ENCODE measurements at regions of chr5 and their contacts with region 1.

Region 1: DNA sequence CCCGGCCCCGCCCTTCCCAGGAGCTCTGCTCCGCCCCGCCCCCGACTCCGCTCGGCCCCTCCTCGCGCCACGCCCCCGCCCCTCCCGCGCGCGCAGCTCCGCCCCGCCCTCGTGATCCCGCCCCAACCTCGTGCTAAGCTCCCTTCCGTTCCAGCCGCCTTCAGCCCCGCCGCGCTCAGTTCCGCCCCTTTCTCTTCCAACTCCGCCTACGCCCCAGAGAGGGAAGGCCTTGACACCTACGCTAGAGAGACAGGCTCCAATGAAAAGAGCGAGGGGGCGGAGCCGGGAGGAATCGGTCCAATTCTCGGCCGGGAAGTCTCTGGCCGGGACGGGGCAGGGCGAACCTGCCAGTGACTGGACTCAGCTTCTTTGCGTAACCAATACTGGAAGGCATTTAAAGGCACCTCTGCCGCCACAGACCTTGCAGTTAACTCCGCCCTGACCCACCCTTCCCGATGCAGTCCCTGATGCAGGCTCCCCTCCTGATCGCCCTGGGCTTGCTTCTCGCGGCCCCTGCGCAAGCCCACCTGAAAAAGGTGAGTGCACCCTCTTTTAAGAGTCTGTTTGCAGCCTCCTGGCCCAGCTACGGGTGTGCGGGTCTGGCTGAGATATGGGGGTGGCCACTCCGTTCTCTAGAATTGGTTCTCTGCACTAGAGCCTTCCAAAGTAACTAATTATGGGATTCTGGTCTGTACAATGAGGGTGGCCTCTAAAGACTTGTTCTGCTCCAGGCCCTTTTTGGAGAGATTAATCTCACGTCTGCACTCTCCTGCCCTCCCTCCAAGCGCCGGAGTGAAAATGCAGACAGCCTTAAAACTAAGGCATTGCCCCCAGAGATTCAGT is at the start of gene GM2A:
- DNase-seq: peak; percentile 92
- ATAC-seq: peak; percentile 83
- H3K4me3 Mint-ChIP-seq: peak within 1 kb of the TSS; percentile 96
- H3K27ac Mint-ChIP-seq: peak within 1 kb of the TSS; percentile 96
- H3K4me1 Mint-ChIP-seq: peaks cover 65% of the 10 kb centered on the region
- H3K27me3 Mint-ChIP-seq: no peaks in the 10 kb centered on the region
- CTCF ChIP-seq: no peak
- total RNA-seq, gene GM2A: 51.3 and 53.1 TPM in 2 replicates

Region 2: DNA sequence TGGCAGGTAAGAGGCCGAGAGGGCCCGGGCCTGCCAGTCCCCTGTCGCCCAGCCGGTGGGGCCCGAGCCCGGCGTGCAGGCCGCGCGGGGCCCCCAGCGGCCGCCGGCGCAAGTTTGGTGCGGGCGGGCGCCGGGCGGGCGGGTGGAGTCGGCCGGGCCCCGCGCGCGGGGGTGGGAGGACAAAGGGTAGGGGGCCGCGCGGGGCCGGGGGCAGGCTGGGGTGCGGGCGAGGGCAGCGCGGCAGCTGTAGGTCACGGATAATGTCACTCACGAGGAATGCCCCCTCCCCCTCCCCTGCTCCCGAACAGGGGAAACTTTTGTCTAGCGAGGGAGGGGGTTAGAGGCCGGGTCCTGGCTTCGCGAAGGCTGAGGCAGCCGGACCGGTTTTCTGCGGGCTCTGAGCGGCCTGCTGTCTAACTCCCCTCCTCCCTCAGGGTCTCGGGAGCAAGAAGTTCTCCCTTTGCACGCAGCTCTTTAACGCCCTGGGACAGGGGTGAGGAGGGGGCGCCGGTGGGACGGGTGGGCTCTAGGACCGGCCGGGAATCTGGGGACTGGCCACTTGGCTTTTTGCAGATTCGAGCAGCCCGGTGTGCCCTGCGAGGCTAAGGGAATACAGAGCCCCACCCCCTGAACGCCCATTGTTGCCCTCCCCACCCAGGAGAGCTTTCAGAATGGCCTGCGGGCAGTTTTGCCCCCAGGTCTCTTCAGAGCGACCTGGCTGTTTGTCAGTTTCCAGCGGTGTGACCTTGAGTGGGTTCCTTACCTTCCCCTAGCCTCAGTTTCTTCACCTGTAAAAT is 766.4 kb before region 1 on chr5:
- CTCF ChIA-PET with region 1: no interaction called
- POLR2A ChIA-PET with region 1: interaction called, 15 read pairs
- intact Hi-C with region 1: no loop called
- DNase-seq: peak; percentile 76
- ATAC-seq: peak; percentile 38
- H3K4me3 Mint-ChIP-seq: peak overlapping the region; percentile 79
- H3K27ac Mint-ChIP-seq: peak overlapping the region; percentile 85
- H3K4me1 Mint-ChIP-seq: peaks cover 53% of the 10 kb centered on the region
- H3K27me3 Mint-ChIP-seq: no peaks in the 10 kb centered on the region
- CTCF ChIP-seq: no peak

Region 3: DNA sequence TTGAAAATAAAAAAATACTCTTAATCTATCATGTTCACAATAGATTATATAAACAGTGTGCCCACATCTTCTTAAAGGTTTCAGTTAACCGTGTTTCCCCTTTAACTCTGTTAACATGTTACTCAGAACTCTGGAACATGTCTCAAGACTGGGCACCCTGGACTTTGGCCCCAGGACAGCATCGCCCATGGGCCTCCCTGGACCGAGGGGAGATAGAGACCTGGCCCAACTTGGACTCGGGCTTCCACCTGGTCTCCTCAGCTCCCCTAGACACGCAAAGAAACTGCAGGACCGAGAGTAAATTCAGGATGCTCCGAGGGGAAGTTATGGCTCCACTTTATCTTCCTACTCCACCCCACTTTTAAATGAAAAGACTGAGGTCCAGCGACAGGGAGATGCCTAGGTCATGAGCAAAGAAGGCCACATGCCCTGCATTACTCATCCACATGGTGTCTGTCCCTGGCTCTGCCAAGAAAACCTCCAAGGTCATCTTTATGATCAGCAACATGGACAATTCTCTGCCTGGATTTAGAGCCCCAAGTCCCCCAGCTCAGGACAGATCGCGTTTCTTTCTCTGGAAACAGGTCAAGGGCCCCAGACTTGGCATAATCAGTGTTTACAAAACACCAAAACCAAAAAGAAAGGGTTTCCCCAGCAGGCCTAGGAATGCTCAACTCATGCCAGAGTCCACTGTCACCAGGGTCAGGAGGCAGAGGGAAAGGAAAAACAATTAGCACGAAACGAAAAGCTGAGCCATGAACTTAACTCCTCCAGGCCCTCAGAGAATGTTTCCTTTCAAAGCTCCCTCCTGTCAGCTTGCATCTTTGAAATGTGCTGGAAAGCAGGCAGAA is 215.2 kb before region 1 on chr5:
- CTCF ChIA-PET with region 1: no interaction called
- POLR2A ChIA-PET with region 1: no interaction called
- intact Hi-C with region 1: no loop called
- DNase-seq: no peak
- ATAC-seq: no peak
- H3K4me3 Mint-ChIP-seq: no peak overlapping the region
- H3K27ac Mint-ChIP-seq: no peak overlapping the region
- H3K4me1 Mint-ChIP-seq: no peaks in the 10 kb centered on the region
- H3K27me3 Mint-ChIP-seq: no peaks in the 10 kb centered on the region
- CTCF ChIP-seq: no peak

Region 4: GRCh38 chr5:151051066-151051930 is 201.7 kb before region 1 on chr5:
- CTCF ChIA-PET with region 1: interaction called, 11 read pairs
- POLR2A ChIA-PET with region 1: no interaction called
- intact Hi-C with region 1: no loop called
- DNase-seq: peak; percentile 59
- ATAC-seq: peak; percentile 89
- H3K4me3 Mint-ChIP-seq: no peak overlapping the region
- H3K27ac Mint-ChIP-seq: peak overlapping the region; percentile 76
- H3K4me1 Mint-ChIP-seq: peaks cover 37% of the 10 kb centered on the region
- H3K27me3 Mint-ChIP-seq: no peaks in the 10 kb centered on the region
- CTCF ChIP-seq: peak; percentile 41

Region 5: DNA sequence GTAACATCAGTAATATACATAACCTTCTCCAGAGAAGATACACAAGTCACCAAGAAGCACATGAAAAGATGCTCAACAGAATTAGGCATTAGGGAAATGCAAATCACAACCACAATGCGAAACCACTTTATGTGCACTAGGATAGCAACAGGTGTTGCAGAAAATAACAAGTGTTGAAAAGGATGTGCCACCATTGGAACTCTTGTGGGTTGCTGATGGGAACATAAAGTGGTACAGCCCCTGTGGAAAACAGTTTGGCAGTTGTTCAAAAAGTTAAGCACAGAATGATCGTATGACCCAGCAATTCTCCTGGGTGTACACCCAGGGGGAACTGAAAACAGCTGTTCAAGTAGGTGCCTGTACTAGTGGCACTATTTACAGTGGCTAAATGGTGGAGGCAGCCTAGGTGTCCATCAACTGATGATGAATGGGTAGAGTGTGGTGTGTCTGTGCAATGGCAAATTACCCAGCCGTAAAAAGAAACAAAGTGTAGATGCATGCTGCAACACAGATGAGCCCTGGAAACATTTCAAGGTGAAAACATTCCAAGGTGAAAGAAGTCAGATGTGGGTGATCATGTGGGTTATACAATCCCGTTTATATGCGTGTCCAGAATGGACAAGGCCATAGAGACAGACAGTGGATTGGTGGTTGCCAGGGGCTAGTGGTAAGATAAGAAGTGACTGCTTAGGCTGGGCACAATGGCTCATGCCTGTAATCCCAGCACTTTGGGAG is 56.3 kb before region 1 on chr5:
- CTCF ChIA-PET with region 1: no interaction called
- POLR2A ChIA-PET with region 1: interaction called, 5 read pairs
- intact Hi-C with region 1: loop called (anchors 1 kb)
- DNase-seq: peak; percentile 31
- ATAC-seq: peak; percentile 95
- H3K4me3 Mint-ChIP-seq: peak overlapping the region; percentile 29
- H3K27ac Mint-ChIP-seq: peak overlapping the region; percentile 84
- H3K4me1 Mint-ChIP-seq: peaks cover 75% of the 10 kb centered on the region
- H3K27me3 Mint-ChIP-seq: no peaks in the 10 kb centered on the region
- CTCF ChIP-seq: no peak

Region 6: GRCh38 chr5:151239237-151239861 is 13.6 kb before region 1 on chr5:
- CTCF ChIA-PET with region 1: interaction called, 16 read pairs
- POLR2A ChIA-PET with region 1: interaction called, 39 read pairs
- intact Hi-C with region 1: loop called (anchors 1 kb)
- DNase-seq: peak; percentile 58
- ATAC-seq: peak; percentile 60
- H3K4me3 Mint-ChIP-seq: peak overlapping the region; percentile 77
- H3K27ac Mint-ChIP-seq: peak overlapping the region; percentile 72
- H3K4me1 Mint-ChIP-seq: peaks cover 95% of the 10 kb centered on the region
- H3K27me3 Mint-ChIP-seq: no peaks in the 10 kb centered on the region
- CTCF ChIP-seq: peak; percentile 85

Region 7: GRCh38 chr5:151771259-151772028 is 518.5 kb after region 1 on chr5 and contains the start of gene G3BP1:
- CTCF ChIA-PET with region 1: no interaction called
- POLR2A ChIA-PET with region 1: interaction called, 6 read pairs
- intact Hi-C with region 1: loop called (anchors 1 kb)
- DNase-seq: peak; percentile 90
- ATAC-seq: peak; percentile 76
- H3K4me3 Mint-ChIP-seq: peak within 1 kb of the TSS; percentile 94
- H3K27ac Mint-ChIP-seq: peak within 1 kb of the TSS; percentile 88
- H3K4me1 Mint-ChIP-seq: peaks cover 48% of the 10 kb centered on the region
- H3K27me3 Mint-ChIP-seq: no peaks in the 10 kb centered on the region
- CTCF ChIP-seq: no peak
- total RNA-seq, gene G3BP1: 227 and 239 TPM in 2 replicates

Measured in activated B cell treated with CpG ODN at 0.5 μM for 24 hours (primary cell).